Naive thymus-derived CD4-positive, alpha-beta T cell (primary cell): ENCODE measurements at regions of chr6 and their contacts with region 1.

Region 1: GRCh38 chr6:26025894-26026832 is 61.1 kb upstream of the HFE start:
- DNase-seq: peak; percentile 82 to 98 (median 95)
- ATAC-seq: peak; percentile 60
- H3K4me3 ChIP-seq: peak overlapping the region; percentile 75
- H3K4me3 Mint-ChIP-seq: peak overlapping the region; percentile 81 to 99 (median 94)
- H3K27ac ChIP-seq: peak overlapping the region; percentile 94
- H3K27ac Mint-ChIP-seq: peak overlapping the region; percentile 93 to 100 (median 98)
- H3K4me1 ChIP-seq: peaks cover 11 to 22% of the 10 kb centered on the region in 2 donors
- H3K4me1 Mint-ChIP-seq: peaks cover 12 to 81% (median 50%) of the 10 kb centered on the region in 7 donors
- H3K27me3 ChIP-seq: no peaks in the 10 kb centered on the region
- H3K27me3 Mint-ChIP-seq: peaks cover 0 to 9% (median 0%) of the 10 kb centered on the region in 5 donors

Region 2: GRCh38 chr6:26003102-26003694 is 23.0 kb before region 1 on chr6:
- CTCF ChIA-PET with region 1: interaction called, 27 read pairs
- POLR2A ChIA-PET with region 1: interaction called, 166 read pairs
- intact Hi-C with region 1: no loop called
- DNase-seq: peak in 6 of 9 donors; percentile 34 to 44 (median 38)
- ATAC-seq: peak; percentile 63
- H3K4me3 ChIP-seq: no peak overlapping the region
- H3K4me3 Mint-ChIP-seq: no peak overlapping the region
- H3K27ac ChIP-seq: no peak overlapping the region
- H3K27ac Mint-ChIP-seq: no peak overlapping the region
- H3K4me1 ChIP-seq: no peaks in the 10 kb centered on the region
- H3K4me1 Mint-ChIP-seq: peaks cover 4 to 15% (median 10%) of the 10 kb centered on the region in 7 donors
- H3K27me3 ChIP-seq: no peaks in the 10 kb centered on the region
- H3K27me3 Mint-ChIP-seq: no peaks in the 10 kb centered on the region

Region 3: GRCh38 chr6:26103770-26104456 is 77.8 kb after region 1 on chr6:
- CTCF ChIA-PET with region 1: interaction called, 3 read pairs
- POLR2A ChIA-PET with region 1: interaction called, 78 read pairs
- intact Hi-C with region 1: loop called in 1 of 2 experiments (anchors 1 kb)
- DNase-seq: peak; percentile 83 to 96 (median 95)
- ATAC-seq: peak; percentile 94
- H3K4me3 ChIP-seq: peak overlapping the region; percentile 40
- H3K4me3 Mint-ChIP-seq: peak overlapping the region; percentile 81 to 97 (median 89)
- H3K27ac ChIP-seq: peak overlapping the region; percentile 75
- H3K27ac Mint-ChIP-seq: peak overlapping the region; percentile 96 to 100 (median 98)
- H3K4me1 ChIP-seq: peaks cover 4 to 12% of the 10 kb centered on the region in 2 donors
- H3K4me1 Mint-ChIP-seq: peaks cover 7 to 25% (median 22%) of the 10 kb centered on the region in 7 donors
- H3K27me3 ChIP-seq: no peaks in the 10 kb centered on the region
- H3K27me3 Mint-ChIP-seq: peaks cover 0 to 3% (median 0%) of the 10 kb centered on the region in 5 donors

Region 4: GRCh38 chr6:26216356-26216885 is 190.3 kb after region 1 on chr6:
- CTCF ChIA-PET with region 1: interaction called, 4 read pairs
- POLR2A ChIA-PET with region 1: interaction called, 48 read pairs
- intact Hi-C with region 1: no loop called
- DNase-seq: peak; percentile 56 to 97 (median 93)
- ATAC-seq: peak; percentile 86
- H3K4me3 ChIP-seq: peak overlapping the region; percentile 72
- H3K4me3 Mint-ChIP-seq: no peak overlapping the region
- H3K27ac ChIP-seq: peak overlapping the region; percentile 84
- H3K27ac Mint-ChIP-seq: no peak overlapping the region
- H3K4me1 ChIP-seq: peaks cover 12 to 18% of the 10 kb centered on the region in 2 donors
- H3K4me1 Mint-ChIP-seq: peaks cover 3 to 31% (median 10%) of the 10 kb centered on the region in 7 donors
- H3K27me3 ChIP-seq: no peaks in the 10 kb centered on the region
- H3K27me3 Mint-ChIP-seq: no peaks in the 10 kb centered on the region

Region 5: GRCh38 chr6:26473758-26474438 is 447.7 kb after region 1 on chr6:
- CTCF ChIA-PET with region 1: no interaction called
- POLR2A ChIA-PET with region 1: no interaction called
- intact Hi-C with region 1: loop called in 1 of 2 experiments (anchors 2 kb)
- DNase-seq: peak; percentile 37 to 94 (median 90)
- ATAC-seq: peak; percentile 96
- H3K4me3 ChIP-seq: peak overlapping the region; percentile 67
- H3K4me3 Mint-ChIP-seq: peak overlapping the region; percentile 88 to 100 (median 97)
- H3K27ac ChIP-seq: peak overlapping the region; percentile 91
- H3K27ac Mint-ChIP-seq: peak overlapping the region; percentile 98 to 100 (median 100)
- H3K4me1 ChIP-seq: peaks cover 33% of the 10 kb centered on the region in 2 donors
- H3K4me1 Mint-ChIP-seq: peaks cover 41 to 72% (median 64%) of the 10 kb centered on the region in 7 donors
- H3K27me3 ChIP-seq: no peaks in the 10 kb centered on the region
- H3K27me3 Mint-ChIP-seq: no peaks in the 10 kb centered on the region

Region 6: GRCh38 chr6:27809939-27810767 is 1784.0 kb after region 1 on chr6:
- CTCF ChIA-PET with region 1: no interaction called
- POLR2A ChIA-PET with region 1: interaction called, 44 read pairs
- intact Hi-C with region 1: loop called (anchors 2 to 5 kb)
- DNase-seq: peak; percentile 66 to 96 (median 92)
- ATAC-seq: peak; percentile 71
- H3K4me3 ChIP-seq: peak overlapping the region; percentile 76
- H3K4me3 Mint-ChIP-seq: peak overlapping the region; percentile 81 to 97 (median 94)
- H3K27ac ChIP-seq: peak overlapping the region; percentile 86
- H3K27ac Mint-ChIP-seq: peak overlapping the region; percentile 95 to 99 (median 98)
- H3K4me1 ChIP-seq: peaks cover 20 to 42% of the 10 kb centered on the region in 2 donors
- H3K4me1 Mint-ChIP-seq: peaks cover 18 to 82% (median 61%) of the 10 kb centered on the region in 7 donors
- H3K27me3 ChIP-seq: no peaks in the 10 kb centered on the region
- H3K27me3 Mint-ChIP-seq: peaks cover 0 to 9% (median 0%) of the 10 kb centered on the region in 5 donors